ENCODE measurements at regions of chr3 and their contacts with region 1.

Region 1: DNA sequence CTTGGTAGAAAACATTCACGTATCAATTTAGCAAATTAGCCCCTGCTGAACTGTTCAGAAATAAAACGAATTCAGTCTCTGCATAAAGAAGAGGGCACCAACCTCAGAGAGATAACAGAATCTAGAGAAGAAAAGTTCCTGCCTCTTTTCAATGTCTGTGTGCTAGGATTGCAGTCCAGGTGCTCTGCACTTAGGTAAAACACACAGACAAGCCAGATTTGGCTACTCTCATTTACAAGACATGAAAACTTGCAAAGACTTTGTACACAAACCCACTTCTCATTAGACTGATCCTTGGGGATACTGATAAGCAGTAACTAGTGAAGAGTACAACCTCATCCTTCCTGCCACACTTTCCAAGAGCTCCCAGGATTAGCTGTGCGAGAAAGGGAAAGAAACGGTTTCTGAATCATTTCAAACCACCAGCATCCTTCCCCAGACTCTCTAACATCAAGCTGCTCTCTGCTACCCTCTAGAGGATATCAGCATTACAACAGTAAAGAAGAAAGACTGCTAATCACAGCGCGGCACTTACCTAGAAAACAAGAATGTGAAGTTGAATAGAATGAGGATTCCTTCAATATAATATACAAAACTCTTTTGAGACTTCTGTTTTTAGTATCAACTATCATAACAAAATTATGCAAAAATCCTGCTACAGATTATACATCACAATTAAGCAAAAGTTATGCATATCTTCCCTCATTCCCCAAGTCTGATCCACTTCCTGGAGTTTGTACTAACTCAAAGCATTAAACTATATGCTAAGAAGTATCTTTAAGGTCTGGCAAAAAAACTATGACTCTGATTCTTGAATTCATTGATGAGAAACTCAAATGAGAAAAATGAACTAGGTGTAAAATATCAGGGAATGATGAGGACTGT is 306.4 kb downstream of the MAGI1 start:
- DNase-seq: no peak
- ATAC-seq: peak in 3 of 4 donors; percentile 62 to 74 (median 63)
- H3K4me3 ChIP-seq: no peak overlapping the region
- H3K27ac ChIP-seq: no peak overlapping the region
- H3K4me1 ChIP-seq: peaks cover 0 to 38% (median 30%) of the 10 kb centered on the region in 12 donors
- H3K27me3 ChIP-seq: no peaks in the 10 kb centered on the region
- CTCF ChIP-seq: peak; percentile 68 to 88 (median 81)
- POLR2A ChIP-seq: no peak

Region 2: GRCh38 chr3:64520334-64520733 is 1212.0 kb before region 1 on chr3:
- intact Hi-C with region 1: loop called in 1 of 10 experiments (anchors 10 kb)
- DNase-seq: no peak
- ATAC-seq: no peak
- H3K4me3 ChIP-seq: no peak overlapping the region
- H3K27ac ChIP-seq: no peak overlapping the region
- H3K4me1 ChIP-seq: no peaks in the 10 kb centered on the region
- H3K27me3 ChIP-seq: no peaks in the 10 kb centered on the region
- CTCF ChIP-seq: no peak
- POLR2A ChIP-seq: no peak

Region 3: GRCh38 chr3:65334045-65334665 is 398.1 kb before region 1 on chr3:
- intact Hi-C with region 1: loop called in 1 of 10 experiments (anchors 10 kb)
- DNase-seq: peak in 3 of 5 donors; percentile 32 to 58 (median 46)
- ATAC-seq: peak; percentile 39 to 75 (median 53)
- H3K4me3 ChIP-seq: no peak overlapping the region
- H3K27ac ChIP-seq: peak overlapping the region in 2 of 12 donors; percentile 3 to 13
- H3K4me1 ChIP-seq: peaks cover 0 to 30% (median 13%) of the 10 kb centered on the region in 12 donors
- H3K27me3 ChIP-seq: no peaks in the 10 kb centered on the region
- CTCF ChIP-seq: peak in 10 of 12 donors; percentile 3 to 56 (median 30)
- POLR2A ChIP-seq: no peak

Region 4: GRCh38 chr3:65439641-65440284 is 292.5 kb before region 1 on chr3:
- intact Hi-C with region 1: loop called (anchors 1 to 5 kb)
- DNase-seq: peak in 4 of 5 donors; percentile 47 to 69 (median 62)
- ATAC-seq: peak; percentile 80 to 91 (median 90)
- H3K4me3 ChIP-seq: no peak overlapping the region
- H3K27ac ChIP-seq: no peak overlapping the region
- H3K4me1 ChIP-seq: peaks cover 0 to 10% (median 6%) of the 10 kb centered on the region in 12 donors
- H3K27me3 ChIP-seq: no peaks in the 10 kb centered on the region
- CTCF ChIP-seq: peak; percentile 30 to 77 (median 64)
- POLR2A ChIP-seq: no peak

Region 5: DNA sequence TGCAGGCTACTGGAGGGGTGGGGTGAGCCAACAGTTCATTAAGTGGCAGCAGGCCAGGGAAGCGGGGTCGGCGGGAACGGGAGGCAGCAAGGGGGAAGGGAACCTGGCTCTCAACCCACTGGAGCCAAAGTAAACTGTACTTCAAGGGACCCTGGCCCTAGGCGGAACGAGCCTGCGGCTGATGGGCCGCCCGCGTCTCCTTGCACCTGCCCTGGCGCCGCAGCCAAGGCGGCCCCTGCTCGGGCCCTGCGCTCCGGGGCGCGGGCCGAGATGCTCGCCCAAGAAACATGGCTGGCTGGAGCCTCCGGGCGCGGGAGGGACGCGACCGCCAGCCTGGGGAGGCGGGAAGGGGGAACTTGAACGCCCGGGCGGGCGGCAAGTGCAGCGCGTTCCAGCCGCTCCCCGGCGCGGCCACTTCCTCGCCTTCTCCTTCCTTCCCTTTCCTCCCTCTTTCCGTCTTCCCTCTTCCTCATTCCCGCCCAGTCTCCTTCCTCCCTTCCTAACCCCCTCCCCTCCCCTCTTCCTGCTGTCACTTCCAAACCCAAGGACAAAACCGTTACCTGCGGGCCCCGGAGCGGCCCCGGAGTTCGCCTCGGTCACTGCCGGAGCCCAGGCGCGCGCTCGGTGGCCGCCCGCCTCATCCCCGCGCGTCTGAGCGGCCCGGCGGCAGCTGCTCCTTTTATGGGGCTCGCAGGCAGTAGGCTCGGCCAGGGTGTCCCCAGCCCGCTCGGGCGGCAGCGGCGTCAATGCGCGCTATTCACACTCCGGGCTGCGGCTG is 183.3 kb before region 1 on chr3:
- intact Hi-C with region 1: loop called in 1 of 10 experiments (anchors 10 kb)
- DNase-seq: peak; percentile 33 to 72 (median 54)
- ATAC-seq: peak; percentile 48 to 91 (median 84)
- H3K4me3 ChIP-seq: peak overlapping the region; percentile 33 to 82 (median 61)
- H3K27ac ChIP-seq: peak overlapping the region in 10 of 12 donors; percentile 50 to 85 (median 72)
- H3K4me1 ChIP-seq: peaks cover 0 to 46% (median 16%) of the 10 kb centered on the region in 12 donors
- H3K27me3 ChIP-seq: peaks cover 0 to 8% (median 0%) of the 10 kb centered on the region in 9 donors
- CTCF ChIP-seq: no peak
- POLR2A ChIP-seq: no peak

Region 6: DNA sequence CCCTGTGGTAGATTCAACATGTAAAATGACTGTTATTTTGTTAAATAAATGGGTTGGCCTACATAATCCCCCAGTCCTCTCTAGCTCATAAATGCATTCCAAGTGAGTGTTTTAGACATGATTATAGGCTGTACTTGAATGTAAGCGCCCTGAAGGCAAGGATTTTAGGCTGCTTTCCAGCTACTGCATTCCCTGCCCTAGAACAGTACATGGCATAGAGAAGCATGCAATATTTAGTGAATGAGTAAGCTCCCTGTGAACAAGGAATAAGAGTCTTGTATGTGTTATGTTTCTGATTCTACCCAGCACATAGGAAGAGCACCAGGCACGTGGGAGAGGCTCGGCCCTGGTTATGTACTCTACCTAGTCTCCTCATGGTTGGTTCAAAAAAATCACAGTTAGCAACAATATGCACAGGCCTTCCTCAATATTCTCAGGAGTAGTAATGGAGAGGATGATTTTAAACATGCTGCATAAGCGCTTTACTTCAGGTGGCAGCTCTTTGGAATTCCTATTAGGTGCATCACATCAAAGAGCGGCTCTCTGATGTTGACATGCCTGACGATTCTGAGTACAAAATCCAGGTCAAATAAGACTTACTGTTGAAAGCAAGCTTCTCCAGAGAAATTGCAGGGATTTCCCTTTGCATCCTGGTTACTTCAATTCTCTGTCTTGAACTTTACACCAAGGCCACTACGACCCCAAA is 150.1 kb before region 1 on chr3:
- intact Hi-C with region 1: loop called in 1 of 10 experiments (anchors 10 kb)
- DNase-seq: no peak
- ATAC-seq: peak in 1 of 4 donors; percentile 18
- H3K4me3 ChIP-seq: no peak overlapping the region
- H3K27ac ChIP-seq: no peak overlapping the region
- H3K4me1 ChIP-seq: peaks cover 0 to 25% (median 11%) of the 10 kb centered on the region in 12 donors
- H3K27me3 ChIP-seq: no peaks in the 10 kb centered on the region
- CTCF ChIP-seq: no peak
- POLR2A ChIP-seq: no peak

Region 7: DNA sequence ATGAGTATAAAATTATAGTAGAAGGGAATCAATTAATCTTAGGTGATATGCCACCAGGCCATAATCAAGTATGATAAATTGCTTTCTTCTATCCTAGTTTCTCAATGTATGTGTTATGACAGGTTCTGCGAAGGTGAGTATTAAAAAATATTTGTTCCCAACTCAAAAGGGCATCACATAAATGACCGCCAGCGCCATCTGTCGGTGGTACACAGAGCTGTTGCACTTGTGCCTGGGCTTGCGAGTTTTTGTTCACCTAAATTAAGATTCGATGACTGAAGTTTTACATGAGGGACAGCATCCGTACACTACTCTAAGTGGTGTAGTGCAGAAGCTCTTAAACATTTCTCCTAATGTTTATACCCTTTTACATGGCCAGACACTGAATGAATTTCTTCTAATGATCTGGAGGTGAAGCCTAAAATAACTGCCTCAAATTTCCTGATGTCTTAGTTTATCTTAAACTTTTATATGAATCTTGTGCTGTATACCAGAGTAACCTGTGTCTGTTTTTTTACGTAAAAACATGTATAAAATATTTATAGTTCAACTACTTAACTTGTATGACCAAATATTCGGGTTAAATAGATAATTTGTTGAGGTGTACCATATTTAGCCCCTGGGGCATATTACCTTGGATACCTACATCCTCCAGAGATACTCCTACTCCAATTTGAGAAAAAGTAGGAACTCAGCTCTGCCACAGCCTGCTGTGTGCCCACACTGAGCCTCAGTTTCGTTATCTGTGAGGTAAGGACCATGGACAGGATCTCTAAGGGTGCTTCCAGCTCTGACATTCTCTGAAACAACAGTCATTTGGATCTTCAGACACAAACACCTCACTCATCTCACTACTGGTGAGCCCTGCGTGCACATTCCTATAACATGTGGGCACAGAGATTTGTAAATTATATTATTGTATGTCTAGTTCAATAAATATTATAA is 59.1 kb before region 1 on chr3:
- intact Hi-C with region 1: loop called in 2 of 10 experiments (anchors 5 to 10 kb)
- DNase-seq: peak; percentile 45 to 72 (median 59)
- ATAC-seq: peak in 3 of 4 donors; percentile 26 to 65 (median 55)
- H3K4me3 ChIP-seq: no peak overlapping the region
- H3K27ac ChIP-seq: no peak overlapping the region
- H3K4me1 ChIP-seq: peaks cover 0 to 26% (median 2%) of the 10 kb centered on the region in 12 donors
- H3K27me3 ChIP-seq: no peaks in the 10 kb centered on the region
- CTCF ChIP-seq: peak; percentile 65 to 91 (median 82)
- POLR2A ChIP-seq: no peak

Region 8: DNA sequence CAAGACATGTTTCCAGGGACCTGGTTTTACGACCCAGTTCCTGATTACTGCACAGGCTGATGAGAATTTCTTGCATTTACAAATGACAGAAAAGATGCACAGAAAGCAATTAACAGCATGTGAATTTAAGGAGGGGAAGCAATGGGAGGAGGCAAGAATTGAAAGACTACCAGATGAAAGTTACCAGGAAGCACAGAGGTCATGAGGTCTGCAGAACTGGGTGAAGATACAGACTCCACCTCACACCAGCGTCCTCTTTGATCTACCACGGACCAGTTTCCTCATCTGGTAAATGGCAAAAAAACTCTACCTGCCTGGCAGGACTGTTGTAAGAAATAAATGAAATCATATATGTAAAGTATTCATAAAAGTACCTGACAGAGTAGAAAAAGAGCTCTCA is 40.5 kb after region 1 on chr3:
- intact Hi-C with region 1: no loop called
- DNase-seq: no peak
- ATAC-seq: no peak
- H3K4me3 ChIP-seq: no peak overlapping the region
- H3K27ac ChIP-seq: no peak overlapping the region
- H3K4me1 ChIP-seq: peaks cover 0 to 13% (median 0%) of the 10 kb centered on the region in 12 donors
- H3K27me3 ChIP-seq: no peaks in the 10 kb centered on the region
- CTCF ChIP-seq: no peak
- POLR2A ChIP-seq: no peak